ENCODE measurements at regions of chr7 and their contacts with region 1.

Region 1: GRCh38 chr7:147412782-147413556 is 1177.6 kb upstream of the C7orf33 start:
- DNase-seq: peak; percentile 89
- ATAC-seq: peak; percentile 89
- H3K4me3 ChIP-seq: peak overlapping the region; percentile 44
- H3K27ac ChIP-seq: peak overlapping the region; percentile 64
- H3K4me1 ChIP-seq: peaks cover 37% of the 10 kb centered on the region
- H3K27me3 ChIP-seq: no peaks in the 10 kb centered on the region
- CTCF ChIP-seq: no peak

Region 2: DNA sequence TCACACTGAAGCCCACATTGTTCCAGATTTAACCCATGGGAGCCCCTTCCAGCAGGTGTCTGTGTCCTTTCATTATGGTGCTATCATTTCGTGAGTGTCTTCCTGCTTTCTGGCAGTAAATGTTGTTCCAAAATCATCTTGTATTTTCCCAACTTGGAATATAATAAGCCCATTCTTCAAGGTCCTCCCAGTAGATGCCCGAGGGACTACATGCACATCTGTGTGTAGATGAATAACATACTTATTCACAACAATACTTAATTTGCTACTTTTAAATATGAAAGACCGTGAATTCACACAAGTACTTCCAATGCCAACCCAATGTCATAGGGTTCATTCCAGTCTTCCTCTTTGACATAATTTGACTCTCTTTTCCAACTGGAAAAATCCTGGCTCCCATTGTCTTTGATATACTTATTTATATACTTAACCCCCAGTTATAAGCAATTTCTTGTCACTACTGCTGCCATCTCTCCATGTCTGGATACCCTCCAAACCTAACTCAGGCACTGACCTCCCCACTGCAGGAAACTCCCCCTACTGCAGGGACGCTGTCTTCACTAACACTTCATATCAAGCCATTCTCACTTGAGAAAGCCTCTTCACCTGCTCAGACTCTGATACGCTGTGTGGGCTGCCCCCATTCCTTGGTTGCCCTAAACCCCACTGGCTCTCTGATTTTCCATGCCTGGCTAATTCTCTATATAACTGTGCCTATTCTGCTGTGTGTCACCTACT is 177.2 kb before region 1 on chr7:
- CTCF ChIA-PET with region 1: no interaction called
- POLR2A ChIA-PET with region 1: no interaction called
- intact Hi-C with region 1: loop called (anchors 5 kb)
- DNase-seq: no peak
- ATAC-seq: no peak
- H3K4me3 ChIP-seq: no peak overlapping the region
- H3K27ac ChIP-seq: no peak overlapping the region
- H3K4me1 ChIP-seq: no peaks in the 10 kb centered on the region
- H3K27me3 ChIP-seq: no peaks in the 10 kb centered on the region
- CTCF ChIP-seq: no peak

Region 3: DNA sequence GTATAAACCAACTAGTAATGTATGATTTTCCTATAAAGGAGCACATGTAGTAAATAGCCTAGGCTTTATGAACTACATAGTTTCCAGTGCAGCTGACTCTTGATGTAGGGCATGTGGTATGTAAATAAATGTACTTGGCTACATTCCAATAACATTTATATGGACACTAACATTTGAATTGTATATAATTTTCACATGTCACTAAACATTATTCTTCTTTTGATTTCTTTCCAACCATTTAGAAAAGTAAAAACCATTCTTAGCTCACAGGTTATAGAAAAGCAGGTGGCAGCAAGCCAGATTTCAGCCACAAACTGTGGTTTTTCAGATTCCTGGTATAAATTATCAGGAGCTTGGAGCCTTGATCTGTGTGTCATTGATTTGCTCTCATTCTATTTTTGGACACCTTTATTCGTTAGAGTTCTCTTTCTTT is 114.3 kb before region 1 on chr7:
- CTCF ChIA-PET with region 1: no interaction called
- POLR2A ChIA-PET with region 1: no interaction called
- intact Hi-C with region 1: loop called (anchors 5 kb)
- DNase-seq: peak; percentile 65
- ATAC-seq: peak; percentile 62
- H3K4me3 ChIP-seq: no peak overlapping the region
- H3K27ac ChIP-seq: 0 out of 2 replicates have a peak overlapping the region, but pooled peaks have one; percentile 2
- H3K4me1 ChIP-seq: peaks cover 22% of the 10 kb centered on the region
- H3K27me3 ChIP-seq: no peaks in the 10 kb centered on the region
- CTCF ChIP-seq: no peak

Region 4: DNA sequence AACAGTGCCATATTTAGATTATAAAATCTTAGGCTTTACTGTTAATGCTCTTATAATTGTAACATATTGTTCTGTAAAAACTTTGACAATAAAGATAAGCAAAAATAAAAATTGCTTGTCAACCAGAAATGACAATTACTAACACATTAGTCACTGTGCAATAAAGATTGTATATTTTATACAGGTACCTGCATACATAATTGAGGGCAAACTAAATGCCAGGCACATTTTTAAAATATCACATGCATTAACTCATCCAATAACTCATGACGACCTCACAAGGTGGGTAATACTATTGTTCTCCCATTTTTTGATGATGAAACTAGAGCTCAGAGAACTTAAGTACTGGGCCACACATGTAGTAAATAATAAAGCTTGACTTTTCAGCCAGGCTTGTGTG is 157.4 kb after region 1 on chr7:
- CTCF ChIA-PET with region 1: no interaction called
- POLR2A ChIA-PET with region 1: no interaction called
- intact Hi-C with region 1: loop called (anchors 2 kb)
- DNase-seq: peak; percentile 96
- ATAC-seq: peak; percentile 73
- H3K4me3 ChIP-seq: 0 out of 2 replicates have a peak overlapping the region, but pooled peaks have one; percentile 5
- H3K27ac ChIP-seq: peak overlapping the region; percentile 87
- H3K4me1 ChIP-seq: peaks cover 37% of the 10 kb centered on the region
- H3K27me3 ChIP-seq: no peaks in the 10 kb centered on the region
- CTCF ChIP-seq: no peak